GM12878 (cell line): ENCODE measurements at regions of chr5 and their contacts with region 1.

Region 1: GRCh38 chr5:176573564-176574296 is 24.6 kb downstream of the CDHR2 start:
- DNase-seq: no peak
- ATAC-seq: peak; percentile 96
- H3K4me3 ChIP-seq: no peak overlapping the region
- H3K27ac ChIP-seq: no peak overlapping the region
- H3K4me1 ChIP-seq: no peaks in the 10 kb centered on the region
- H3K27me3 ChIP-seq: no peaks in the 10 kb centered on the region
- CTCF ChIP-seq: peak; percentile 78 to 86 (median 80)
- EP300 ChIP-seq: no peak
- POLR2A ChIP-seq: no peak
- RAD21 ChIP-seq: peak; percentile 81

Region 2: DNA sequence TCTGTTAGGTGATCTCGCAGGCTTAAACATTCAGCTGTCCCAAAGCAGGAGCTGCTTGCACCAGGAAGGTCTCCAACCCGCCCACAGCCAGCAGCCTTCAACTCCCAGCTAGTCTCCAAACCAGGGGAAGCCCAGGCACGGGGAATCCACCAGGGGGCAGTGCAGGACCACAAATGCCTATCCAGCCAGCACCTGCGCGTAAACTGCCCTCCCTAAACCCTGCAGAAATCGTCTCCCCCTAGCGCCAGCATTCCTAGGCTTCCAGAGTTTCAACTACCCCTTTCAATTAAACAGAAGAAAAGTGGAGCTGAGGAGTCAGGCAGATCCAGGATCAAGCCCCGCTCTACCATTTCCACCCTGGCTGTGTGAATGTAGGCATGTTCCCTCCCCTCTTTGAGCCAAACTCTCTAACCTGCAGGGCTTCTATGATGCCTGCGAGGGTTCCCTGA is 843.9 kb before region 1 on chr5:
- CTCF ChIA-PET with region 1: interaction called, 4 read pairs
- POLR2A ChIA-PET with region 1: no interaction called
- RAD21 ChIA-PET with region 1: no interaction called
- SMC1A ChIA-PET with region 1: no interaction called
- in situ Hi-C with region 1: loop called (anchors 25 kb)
- intact Hi-C with region 1: no loop called
- DNase-seq: peak; percentile 20
- ATAC-seq: peak; percentile 100
- H3K4me3 ChIP-seq: no peak overlapping the region
- H3K27ac ChIP-seq: no peak overlapping the region
- H3K4me1 ChIP-seq: no peaks in the 10 kb centered on the region
- H3K27me3 ChIP-seq: no peaks in the 10 kb centered on the region
- CTCF ChIP-seq: peak; percentile 92 to 98 (median 95)
- EP300 ChIP-seq: no peak
- POLR2A ChIP-seq: no peak
- RAD21 ChIP-seq: peak; percentile 94

Region 3: GRCh38 chr5:176619203-176619568 is 45.5 kb after region 1 on chr5:
- CTCF ChIA-PET with region 1: no interaction called
- POLR2A ChIA-PET with region 1: no interaction called
- RAD21 ChIA-PET with region 1: no interaction called
- SMC1A ChIA-PET with region 1: no interaction called
- in situ Hi-C with region 1: no loop called
- intact Hi-C with region 1: loop called (anchors 5 kb)
- DNase-seq: no peak
- ATAC-seq: peak; percentile 98
- H3K4me3 ChIP-seq: no peak overlapping the region
- H3K27ac ChIP-seq: no peak overlapping the region
- H3K4me1 ChIP-seq: no peaks in the 10 kb centered on the region
- H3K27me3 ChIP-seq: peaks cover 4 to 7% of the 10 kb centered on the region in 2 experiments
- CTCF ChIP-seq: peak in 2 of 3 experiments; percentile 37 to 48; a peak in 4 of 6 replicates
- EP300 ChIP-seq: no peak
- POLR2A ChIP-seq: no peak
- RAD21 ChIP-seq: peak; percentile 28; the same call in 1 of the 2 replicates

Region 4: DNA sequence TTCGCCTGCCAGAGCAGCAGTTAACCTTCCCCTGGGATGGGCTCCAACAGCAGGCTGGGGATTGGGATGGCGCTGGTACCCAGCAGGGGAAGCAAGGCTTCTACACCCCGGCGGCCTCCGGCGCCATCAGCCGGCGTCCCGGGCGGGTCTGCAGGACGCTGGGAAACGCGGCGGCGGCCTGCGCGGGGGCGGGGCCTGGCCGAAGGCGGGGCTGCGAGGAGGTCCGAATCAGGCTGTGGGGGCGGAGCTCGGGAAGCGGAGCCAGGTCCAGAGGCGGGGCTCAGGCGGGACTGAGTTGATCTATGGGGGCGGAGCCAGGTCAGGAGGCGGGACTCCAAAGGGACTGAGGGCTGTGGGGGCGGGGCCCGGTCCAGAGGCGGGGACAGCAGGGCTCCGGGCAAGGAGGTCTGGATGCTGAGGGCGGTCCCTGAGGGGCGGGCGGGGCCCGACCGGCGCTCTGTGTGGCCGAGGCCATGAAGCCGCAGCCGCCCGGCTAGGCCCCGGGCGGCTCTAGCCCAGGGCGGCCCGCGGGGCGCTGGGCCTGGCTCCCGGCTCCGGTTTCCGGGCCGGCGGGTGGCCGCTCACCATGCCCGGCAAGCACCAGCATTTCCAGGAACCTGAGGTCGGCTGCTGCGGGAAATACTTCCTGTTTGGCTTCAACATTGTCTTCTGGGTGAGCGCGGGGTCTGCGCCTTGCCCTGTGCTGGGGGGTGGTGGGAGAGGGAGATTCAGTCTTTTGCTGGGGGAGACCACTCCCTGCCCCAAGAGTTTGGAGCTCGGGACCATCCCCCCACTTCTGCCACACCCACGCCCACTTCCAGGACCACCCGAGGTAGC is 73.5 kb after region 1 on chr5 and contains the start of gene TSPAN17:
- CTCF ChIA-PET with region 1: interaction called, 19 read pairs
- POLR2A ChIA-PET with region 1: no interaction called
- RAD21 ChIA-PET with region 1: interaction called, 4 read pairs
- SMC1A ChIA-PET with region 1: interaction called, 3 read pairs
- in situ Hi-C with region 1: no loop called
- intact Hi-C with region 1: loop called (anchors 5 kb)
- DNase-seq: peak; percentile 92
- ATAC-seq: peak; percentile 97
- H3K4me3 ChIP-seq: peak within 1 kb of the TSS; percentile 88
- H3K27ac ChIP-seq: peak within 1 kb of the TSS; percentile 53
- H3K4me1 ChIP-seq: peaks cover 22% of the 10 kb centered on the region
- H3K27me3 ChIP-seq: no peaks in the 10 kb centered on the region
- CTCF ChIP-seq: peak; percentile 7 to 55 (median 32); a peak in 3 of 6 replicates
- EP300 ChIP-seq: no peak
- POLR2A ChIP-seq: peak; percentile 97
- RAD21 ChIP-seq: peak; percentile 43; the same call in 1 of the 2 replicates
- polyA plus RNA-seq, gene TSPAN17: 0.24 to 1.2 TPM

Region 5: DNA sequence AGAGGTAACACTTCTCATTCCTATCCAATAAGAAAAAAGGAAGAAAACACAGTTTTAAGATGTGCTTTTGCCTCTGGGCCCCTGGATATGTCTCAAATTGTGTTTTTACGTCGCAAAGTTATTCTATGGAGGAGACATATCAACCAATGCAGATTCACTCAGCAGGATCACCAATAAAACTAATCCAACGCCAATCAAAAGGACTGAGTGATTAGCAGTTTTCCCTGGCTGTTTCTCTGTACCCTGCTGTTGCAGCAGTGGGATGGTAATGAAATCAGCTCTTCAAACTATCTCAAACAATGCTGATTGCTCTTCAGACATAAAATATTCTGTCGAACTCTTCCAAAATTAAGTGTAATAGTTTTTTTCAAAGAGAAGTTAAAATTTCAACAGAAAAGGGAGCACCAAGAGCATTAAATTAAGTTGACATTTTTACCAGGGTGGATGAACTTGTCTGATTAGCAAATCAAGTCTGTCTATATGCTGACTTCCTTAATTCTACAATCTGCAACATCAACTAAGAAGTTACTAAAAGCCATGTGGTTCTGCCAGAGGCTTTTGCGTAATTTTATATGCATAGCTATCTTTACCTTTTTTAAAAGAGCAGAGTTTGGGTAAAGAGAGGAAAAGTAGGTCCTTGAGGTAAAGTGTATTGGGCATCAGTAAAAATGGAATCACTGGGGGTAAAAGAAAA is 335.1 kb after region 1 on chr5:
- CTCF ChIA-PET with region 1: no interaction called
- POLR2A ChIA-PET with region 1: no interaction called
- RAD21 ChIA-PET with region 1: no interaction called
- SMC1A ChIA-PET with region 1: no interaction called
- in situ Hi-C with region 1: no loop called
- intact Hi-C with region 1: no loop called
- DNase-seq: no peak
- ATAC-seq: no peak
- H3K4me3 ChIP-seq: no peak overlapping the region
- H3K27ac ChIP-seq: no peak overlapping the region
- H3K4me1 ChIP-seq: no peaks in the 10 kb centered on the region
- H3K27me3 ChIP-seq: no peaks in the 10 kb centered on the region
- CTCF ChIP-seq: no peak
- EP300 ChIP-seq: no peak
- POLR2A ChIP-seq: no peak
- RAD21 ChIP-seq: no peak